OCI-LY7 (cell line): ENCODE measurements at regions of chr4 and their contacts with region 1.

Region 1: DNA sequence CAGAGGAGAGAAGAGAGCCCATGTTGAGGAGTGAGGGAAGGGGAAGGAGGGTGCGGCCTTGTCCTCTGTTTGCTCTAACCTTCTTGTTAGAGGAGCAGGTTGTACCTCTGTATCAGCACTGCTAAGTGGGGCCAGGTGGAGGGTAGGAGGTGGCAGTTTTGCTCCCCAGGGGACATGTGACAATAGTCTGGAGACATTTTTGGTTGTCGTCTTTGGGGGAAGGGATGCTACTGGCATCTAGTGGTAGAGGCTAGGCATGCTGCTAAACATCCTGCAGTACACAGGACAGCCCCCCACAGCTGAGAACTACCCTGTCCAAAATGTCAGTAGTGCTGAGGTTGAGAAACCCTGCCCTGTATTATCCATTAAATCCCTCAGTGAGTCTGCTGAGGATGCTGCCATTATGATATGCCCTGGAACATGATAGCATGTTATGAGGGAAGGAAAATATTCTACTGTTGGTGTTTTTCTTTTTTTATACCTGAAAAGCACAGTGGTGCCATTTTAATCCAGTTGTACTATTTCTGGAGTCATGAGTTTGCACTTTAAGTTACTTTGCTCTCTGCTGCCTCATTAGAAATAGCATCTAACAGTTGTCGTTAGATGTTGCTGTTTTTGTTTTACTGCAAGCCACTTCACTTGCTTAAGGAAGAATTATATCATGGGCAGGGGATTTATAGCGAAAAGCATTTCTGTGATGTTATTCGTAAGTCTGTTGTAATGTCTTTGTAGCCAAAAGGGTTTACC is 90.6 kb downstream of the LRP2BP start:
- DNase-seq: peak; percentile 94
- H3K4me3 ChIP-seq: no peak overlapping the region
- H3K27ac ChIP-seq: peak overlapping the region; percentile 72
- H3K4me1 ChIP-seq: peaks cover 66% of the 10 kb centered on the region
- CTCF ChIP-seq: peak; percentile 94

Region 2: DNA sequence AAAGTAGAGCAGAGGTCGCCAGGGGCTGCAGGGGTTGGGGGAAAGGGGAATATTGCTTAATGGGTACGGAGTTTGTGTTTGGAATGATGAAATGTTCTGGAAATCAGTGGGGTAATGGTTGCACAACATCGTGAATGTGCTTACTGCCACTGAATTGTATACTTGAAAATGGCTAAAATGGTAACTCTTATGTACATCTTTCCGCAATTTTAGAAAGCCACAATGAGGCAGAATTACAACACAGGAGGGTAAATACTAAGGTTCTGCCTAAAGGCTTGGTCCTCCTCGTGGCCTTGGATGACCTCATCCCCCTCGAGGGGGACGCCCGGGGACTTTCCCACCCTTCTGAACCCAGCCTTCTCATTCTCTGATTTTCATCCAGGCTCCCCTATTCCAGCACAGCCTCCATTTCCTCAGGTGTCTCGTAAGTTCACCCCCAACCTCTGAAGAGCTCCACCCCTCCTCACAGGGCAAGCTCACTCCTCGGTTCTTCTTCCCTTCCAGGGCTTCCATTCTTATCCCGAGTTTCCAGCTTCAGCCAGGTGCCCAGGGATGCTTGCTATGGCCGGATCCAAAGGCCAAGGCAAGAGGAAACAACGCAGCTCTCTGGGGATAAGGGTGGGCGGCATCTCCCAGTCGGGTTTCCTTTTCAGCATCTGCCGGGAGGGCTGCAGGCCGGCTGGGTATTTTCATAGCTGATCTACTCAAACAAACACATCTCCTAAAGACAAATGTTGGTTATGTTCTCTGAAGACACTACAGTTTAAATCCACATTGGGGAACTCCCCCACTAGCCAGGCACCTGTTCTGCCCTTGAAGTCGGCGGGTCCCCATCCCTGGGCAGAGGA is 408.0 kb before region 1 on chr4:
- CTCF ChIA-PET with region 1: no interaction called
- POLR2A ChIA-PET with region 1: no interaction called
- intact Hi-C with region 1: no loop called
- DNase-seq: no peak
- H3K4me3 ChIP-seq: no peak overlapping the region
- H3K27ac ChIP-seq: no peak overlapping the region
- H3K4me1 ChIP-seq: no peaks in the 10 kb centered on the region
- CTCF ChIP-seq: no peak

Region 3: DNA sequence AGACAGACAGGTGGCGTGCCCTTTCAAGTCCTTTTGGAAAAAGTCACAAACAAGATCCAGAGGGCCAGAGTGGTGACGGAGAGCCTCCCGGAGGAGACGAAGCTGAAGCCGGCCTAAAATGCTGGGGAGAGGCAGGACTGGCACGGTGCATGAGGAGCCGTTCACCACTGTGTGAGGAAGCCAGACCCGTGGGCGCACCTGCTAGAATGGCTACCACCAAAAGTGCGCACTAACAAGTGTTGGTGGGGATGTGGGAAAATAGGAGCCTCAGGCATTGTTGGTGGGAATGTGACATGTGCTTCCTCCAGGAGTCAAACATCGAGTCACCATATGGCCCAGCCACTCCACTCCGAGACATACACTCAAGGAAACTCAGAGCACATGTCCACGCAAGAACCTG is 354.2 kb before region 1 on chr4:
- CTCF ChIA-PET with region 1: no interaction called
- POLR2A ChIA-PET with region 1: no interaction called
- intact Hi-C with region 1: no loop called
- DNase-seq: no peak
- H3K4me3 ChIP-seq: no peak overlapping the region
- H3K27ac ChIP-seq: no peak overlapping the region
- H3K4me1 ChIP-seq: no peaks in the 10 kb centered on the region
- CTCF ChIP-seq: no peak

Region 4: GRCh38 chr4:184968784-184969201 is 336.3 kb before region 1 on chr4:
- CTCF ChIA-PET with region 1: no interaction called
- POLR2A ChIA-PET with region 1: no interaction called
- intact Hi-C with region 1: no loop called
- DNase-seq: no peak
- H3K4me3 ChIP-seq: no peak overlapping the region
- H3K27ac ChIP-seq: no peak overlapping the region
- H3K4me1 ChIP-seq: no peaks in the 10 kb centered on the region
- CTCF ChIP-seq: no peak

Region 5: GRCh38 chr4:185005216-185005819 is 299.8 kb before region 1 on chr4:
- CTCF ChIA-PET with region 1: interaction called, 3 read pairs
- POLR2A ChIA-PET with region 1: no interaction called
- intact Hi-C with region 1: loop called (anchors 1 kb)
- DNase-seq: peak; percentile 83
- H3K4me3 ChIP-seq: peak overlapping the region; percentile 31
- H3K27ac ChIP-seq: no peak overlapping the region
- H3K4me1 ChIP-seq: peaks cover 6% of the 10 kb centered on the region
- CTCF ChIP-seq: peak; percentile 97

Region 6: GRCh38 chr4:185134307-185134869 is 170.7 kb before region 1 on chr4:
- CTCF ChIA-PET with region 1: no interaction called
- POLR2A ChIA-PET with region 1: no interaction called
- intact Hi-C with region 1: loop called (anchors 1 kb)
- DNase-seq: peak; percentile 71
- H3K4me3 ChIP-seq: no peak overlapping the region
- H3K27ac ChIP-seq: no peak overlapping the region
- H3K4me1 ChIP-seq: no peaks in the 10 kb centered on the region
- CTCF ChIP-seq: peak; percentile 96

Region 7: DNA sequence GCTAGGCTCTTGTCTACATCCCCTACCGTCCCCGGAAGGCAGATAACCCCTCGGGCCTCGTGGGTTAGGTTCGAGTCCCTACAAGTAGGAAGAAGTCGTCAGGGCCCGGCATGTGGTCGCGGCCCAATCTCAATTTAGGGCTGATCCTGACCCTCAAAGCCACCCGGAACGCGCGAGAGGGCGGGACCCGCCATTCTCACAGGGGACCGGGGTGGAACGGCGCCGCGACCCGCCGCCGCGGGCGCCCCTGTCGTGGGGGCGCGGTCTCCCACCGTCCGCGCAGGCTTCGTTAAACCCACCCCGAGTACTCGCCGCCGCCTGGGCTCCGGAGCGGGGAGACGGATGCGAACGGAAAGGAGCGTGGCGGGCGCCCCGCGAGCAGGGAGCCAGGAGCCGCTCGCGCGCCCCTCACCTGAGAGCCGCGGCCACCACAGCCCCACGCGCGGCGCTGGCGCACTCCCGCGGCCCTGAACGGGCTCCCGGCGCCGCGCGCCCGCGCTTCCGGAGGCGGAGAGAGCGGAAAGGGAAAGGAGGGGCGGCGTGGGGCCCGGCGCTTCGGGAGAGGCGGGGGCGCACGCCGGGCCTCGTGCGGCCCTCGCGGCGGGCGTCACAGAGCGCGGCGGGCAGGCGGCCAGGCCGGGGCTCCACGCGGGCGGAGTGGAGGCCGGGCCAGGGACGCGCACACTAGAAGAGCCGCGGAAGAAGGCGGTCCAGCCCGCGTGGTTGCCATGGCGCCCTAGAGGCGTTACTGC is 101.5 kb before region 1 on chr4 and contains the start of gene CFAP97:
- CTCF ChIA-PET with region 1: interaction called, 4 read pairs
- POLR2A ChIA-PET with region 1: interaction called, 6 read pairs
- intact Hi-C with region 1: loop called (anchors 1 kb)
- DNase-seq: peak; percentile 76
- H3K4me3 ChIP-seq: peak within 1 kb of the TSS; percentile 78
- H3K27ac ChIP-seq: peak within 1 kb of the TSS; percentile 76
- H3K4me1 ChIP-seq: peaks cover 41% of the 10 kb centered on the region
- CTCF ChIP-seq: no peak
- total RNA-seq, gene CFAP97: 20.4 and 22.7 TPM in 2 replicates

Region 8: DNA sequence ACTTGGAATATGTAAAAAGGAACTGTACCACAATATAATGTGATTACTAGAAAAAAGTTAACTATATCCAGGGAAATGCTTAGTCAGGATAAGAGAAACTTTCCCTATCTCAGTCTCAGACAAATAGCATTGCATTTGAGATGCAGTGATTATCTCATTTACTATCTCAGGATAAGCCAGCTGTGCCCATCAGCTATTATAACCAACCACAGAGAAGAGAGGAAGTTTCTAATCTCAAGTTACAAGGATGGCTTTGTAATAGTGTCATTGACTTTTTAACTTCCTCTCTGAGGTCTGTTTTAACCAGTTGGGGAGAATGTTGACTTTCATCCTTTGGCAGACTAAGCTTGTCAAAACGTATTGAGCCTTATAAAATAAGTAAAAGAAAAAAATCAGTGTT is 39.2 kb before region 1 on chr4:
- CTCF ChIA-PET with region 1: no interaction called
- POLR2A ChIA-PET with region 1: interaction called, 7 read pairs
- intact Hi-C with region 1: loop called (anchors 2 kb)
- DNase-seq: peak; percentile 75
- H3K4me3 ChIP-seq: no peak overlapping the region
- H3K27ac ChIP-seq: peak overlapping the region; percentile 79
- H3K4me1 ChIP-seq: peaks cover 64% of the 10 kb centered on the region
- CTCF ChIP-seq: no peak

Region 9: DNA sequence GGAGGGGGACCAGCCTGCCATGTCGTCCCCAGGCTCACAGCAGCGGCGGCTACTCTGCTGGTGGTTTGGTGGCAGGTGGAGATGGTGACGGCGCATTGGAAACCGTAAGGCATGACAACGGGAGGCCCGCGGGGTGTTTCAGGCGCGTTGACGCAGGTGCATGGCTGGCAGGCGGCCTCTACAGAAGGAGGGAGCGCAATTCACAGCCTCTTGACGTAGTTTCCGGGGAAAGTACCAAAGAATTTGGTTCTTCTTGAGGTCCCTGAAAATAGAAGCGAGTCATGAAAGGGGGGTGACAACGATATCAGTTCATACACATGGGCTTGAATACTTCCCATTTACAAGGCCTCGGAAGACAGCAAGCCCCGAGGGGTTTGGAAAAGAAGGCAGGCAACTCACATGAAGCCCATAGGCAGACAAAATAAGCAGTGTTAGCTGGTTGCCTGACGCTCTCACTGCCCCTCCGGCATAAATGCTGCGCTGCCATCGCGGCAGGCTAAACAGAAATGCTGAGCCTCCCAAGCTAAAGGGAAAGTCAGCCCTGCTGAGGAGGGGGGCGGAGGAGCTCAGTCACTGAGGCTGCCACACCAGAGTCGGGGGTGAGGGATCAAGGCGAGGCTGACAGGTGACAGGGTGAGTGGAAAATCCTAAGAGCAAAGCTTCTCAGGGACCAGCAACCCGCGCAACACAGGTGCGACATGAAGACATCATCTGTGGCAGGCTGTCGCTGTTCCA is 282.5 kb after region 1 on chr4:
- CTCF ChIA-PET with region 1: no interaction called
- POLR2A ChIA-PET with region 1: interaction called, 6 read pairs
- intact Hi-C with region 1: loop called (anchors 5 kb)
- DNase-seq: peak; percentile 90
- H3K4me3 ChIP-seq: peak overlapping the region; percentile 57
- H3K27ac ChIP-seq: peak overlapping the region; percentile 78
- H3K4me1 ChIP-seq: peaks cover 37% of the 10 kb centered on the region
- CTCF ChIP-seq: no peak